MCF 10A (cell line): ENCODE measurements at regions of chr2 and their contacts with region 1.

Region 1: GRCh38 chr2:61658841-61659780 is 121.0 kb upstream of the XPO1 start:
- DNase-seq: peak; percentile 58
- H3K4me3 Mint-ChIP-seq: peak overlapping the region; percentile 28
- H3K27ac Mint-ChIP-seq: no peak overlapping the region
- H3K4me1 Mint-ChIP-seq: peaks cover 18% of the 10 kb centered on the region
- H3K27me3 Mint-ChIP-seq: no peaks in the 10 kb centered on the region
- CTCF ChIP-seq: peak; percentile 57

Region 2: DNA sequence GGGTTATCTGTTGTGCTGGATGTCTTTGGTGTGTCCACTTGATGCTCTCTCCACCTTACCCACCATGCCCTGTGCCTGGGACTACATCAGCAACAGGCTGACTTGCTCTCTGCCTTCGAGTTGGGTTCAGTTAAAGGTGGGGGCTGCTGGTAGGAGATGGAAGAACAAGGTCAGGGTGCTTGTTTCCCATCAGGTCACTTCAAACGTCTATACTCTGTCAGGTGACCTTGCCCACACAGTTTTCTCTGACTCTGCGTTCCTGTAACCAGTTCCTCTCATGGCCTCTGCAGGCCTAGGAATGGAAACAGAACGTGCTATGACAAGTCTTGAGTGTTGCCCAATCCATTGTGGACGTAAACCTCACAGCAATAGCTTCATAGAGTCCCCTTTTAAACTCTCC is 941.4 kb before region 1 on chr2:
- CTCF ChIA-PET with region 1: no interaction called
- POLR2A ChIA-PET with region 1: no interaction called
- intact Hi-C with region 1: no loop called
- DNase-seq: peak; percentile 90
- H3K4me3 Mint-ChIP-seq: no peak overlapping the region
- H3K27ac Mint-ChIP-seq: peak overlapping the region; percentile 89
- H3K4me1 Mint-ChIP-seq: peaks cover 15% of the 10 kb centered on the region
- H3K27me3 Mint-ChIP-seq: no peaks in the 10 kb centered on the region
- CTCF ChIP-seq: no peak

Region 3: DNA sequence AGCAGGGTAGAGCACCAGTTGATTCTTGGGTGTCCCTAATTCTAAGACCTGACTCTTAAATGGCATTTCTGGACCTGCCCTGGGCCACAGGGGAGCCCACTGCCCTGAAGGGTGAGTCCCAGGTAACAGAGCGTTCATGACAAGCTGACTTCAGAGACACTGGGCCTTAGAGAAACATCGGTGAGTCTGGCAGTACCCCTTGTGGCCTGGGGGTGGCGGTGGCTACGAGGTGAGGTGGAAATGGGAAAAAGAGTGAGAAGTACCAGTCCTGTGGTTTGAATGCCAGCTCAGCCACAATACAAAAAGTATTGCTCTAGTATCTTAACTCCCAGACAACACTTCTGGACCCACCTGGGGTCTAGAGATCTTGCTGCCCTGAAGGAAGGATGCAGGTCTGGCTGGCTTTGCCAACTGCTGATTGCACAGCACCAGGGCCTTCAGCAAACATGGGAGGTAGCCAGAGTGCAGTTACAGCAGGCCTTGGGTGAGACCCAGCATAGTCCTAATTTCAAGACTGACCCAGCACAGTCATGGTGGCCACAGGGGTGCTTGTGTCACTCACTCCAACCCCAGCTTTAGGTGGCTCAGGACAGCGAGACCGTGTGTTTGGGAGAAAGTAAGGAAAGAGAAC is 232.7 kb before region 1 on chr2:
- CTCF ChIA-PET with region 1: interaction called, 3 read pairs
- POLR2A ChIA-PET with region 1: no interaction called
- intact Hi-C with region 1: loop called (anchors 10 kb)
- DNase-seq: peak; percentile 69
- H3K4me3 Mint-ChIP-seq: no peak overlapping the region
- H3K27ac Mint-ChIP-seq: no peak overlapping the region
- H3K4me1 Mint-ChIP-seq: peaks cover 38% of the 10 kb centered on the region
- H3K27me3 Mint-ChIP-seq: no peaks in the 10 kb centered on the region
- CTCF ChIP-seq: peak; percentile 35